ENCODE measurements at regions of chr20 and their contacts with region 1.

Region 1: DNA sequence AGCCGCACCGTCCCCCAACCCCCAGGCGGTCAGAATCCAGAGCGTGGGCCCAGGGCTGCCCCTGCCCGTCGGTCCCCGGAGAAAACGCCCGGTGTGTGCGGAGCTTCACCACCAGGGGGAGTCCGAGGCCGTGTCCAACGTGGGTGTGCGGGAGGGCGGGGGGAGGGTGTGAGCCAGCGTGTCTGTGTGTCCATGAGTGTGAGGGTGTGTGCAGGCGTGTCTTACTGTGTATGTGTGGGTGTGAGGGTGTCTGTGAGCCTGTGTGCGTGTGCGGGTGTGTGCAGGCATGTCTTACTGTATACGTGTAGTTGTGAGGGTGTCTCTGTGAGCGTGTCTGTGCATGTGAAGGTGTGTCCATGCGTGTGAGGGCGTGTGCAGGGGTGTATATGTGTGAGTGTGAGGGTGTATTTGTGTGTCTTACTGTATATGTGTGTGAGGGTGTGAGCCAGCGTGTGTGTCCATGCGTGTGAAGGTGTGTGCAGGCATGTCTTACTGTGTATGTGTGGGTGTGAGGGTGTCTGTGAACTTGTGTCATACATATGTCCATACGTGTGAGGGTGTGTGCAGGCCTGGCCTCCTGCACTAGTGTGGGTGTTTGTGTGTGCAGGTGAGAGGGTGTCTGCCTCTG is 24.6 kb upstream of the GATA5 start:
- DNase-seq: peak; percentile 86
- H3K27ac ChIP-seq: peak overlapping the region; percentile 34
- CTCF ChIP-seq: peak; percentile 99

Region 2: DNA sequence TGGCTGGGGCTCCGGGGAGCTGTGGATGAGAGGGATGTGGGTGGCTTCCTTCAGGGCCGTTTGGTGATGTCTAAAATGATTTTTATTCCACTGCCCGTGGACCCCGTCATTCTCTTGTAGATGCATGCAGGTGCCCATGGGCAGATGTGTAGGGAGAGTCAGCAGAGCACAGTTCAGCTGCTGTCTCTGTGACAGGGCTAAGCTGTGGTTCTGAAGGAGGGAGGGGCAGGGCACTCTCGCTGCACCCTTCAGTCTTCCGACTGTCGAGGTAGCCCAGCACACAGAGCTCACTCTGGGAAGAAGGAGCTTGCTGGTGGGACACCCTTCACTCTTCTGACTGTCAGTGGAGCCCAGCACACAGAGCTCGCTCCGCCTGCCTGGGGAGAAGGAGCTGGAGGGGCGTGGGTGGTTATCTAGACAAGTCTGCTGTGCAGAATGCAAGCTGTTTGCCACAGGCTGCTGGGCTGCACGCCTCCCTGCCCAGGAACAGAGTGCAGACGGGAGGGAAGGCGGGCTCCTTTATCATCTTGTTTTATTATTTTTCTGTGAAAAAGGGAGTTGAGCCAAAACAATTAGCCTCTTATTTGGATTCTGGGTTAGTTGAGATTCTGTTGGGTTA is 225.9 kb before region 1 on chr20:
- CTCF ChIA-PET with region 1: no interaction called
- POLR2A ChIA-PET with region 1: no interaction called
- DNase-seq: no peak
- H3K27ac ChIP-seq: peak overlapping the region; percentile 11
- CTCF ChIP-seq: no peak

Region 3: GRCh38 chr20:62409931-62410745 is 90.2 kb before region 1 on chr20:
- CTCF ChIA-PET with region 1: interaction called, 29 read pairs
- POLR2A ChIA-PET with region 1: no interaction called
- DNase-seq: peak; percentile 66
- H3K27ac ChIP-seq: peak overlapping the region; percentile 21
- CTCF ChIP-seq: peak; percentile 78

Region 4: GRCh38 chr20:62427172-62428001 is 73.0 kb before region 1 on chr20 and contains the start of gene RBBP8NL:
- CTCF ChIA-PET with region 1: interaction called, 16 read pairs
- POLR2A ChIA-PET with region 1: no interaction called
- DNase-seq: peak; percentile 93
- H3K27ac ChIP-seq: no peak within 1 kb of the TSS
- CTCF ChIP-seq: no peak

Region 5: DNA sequence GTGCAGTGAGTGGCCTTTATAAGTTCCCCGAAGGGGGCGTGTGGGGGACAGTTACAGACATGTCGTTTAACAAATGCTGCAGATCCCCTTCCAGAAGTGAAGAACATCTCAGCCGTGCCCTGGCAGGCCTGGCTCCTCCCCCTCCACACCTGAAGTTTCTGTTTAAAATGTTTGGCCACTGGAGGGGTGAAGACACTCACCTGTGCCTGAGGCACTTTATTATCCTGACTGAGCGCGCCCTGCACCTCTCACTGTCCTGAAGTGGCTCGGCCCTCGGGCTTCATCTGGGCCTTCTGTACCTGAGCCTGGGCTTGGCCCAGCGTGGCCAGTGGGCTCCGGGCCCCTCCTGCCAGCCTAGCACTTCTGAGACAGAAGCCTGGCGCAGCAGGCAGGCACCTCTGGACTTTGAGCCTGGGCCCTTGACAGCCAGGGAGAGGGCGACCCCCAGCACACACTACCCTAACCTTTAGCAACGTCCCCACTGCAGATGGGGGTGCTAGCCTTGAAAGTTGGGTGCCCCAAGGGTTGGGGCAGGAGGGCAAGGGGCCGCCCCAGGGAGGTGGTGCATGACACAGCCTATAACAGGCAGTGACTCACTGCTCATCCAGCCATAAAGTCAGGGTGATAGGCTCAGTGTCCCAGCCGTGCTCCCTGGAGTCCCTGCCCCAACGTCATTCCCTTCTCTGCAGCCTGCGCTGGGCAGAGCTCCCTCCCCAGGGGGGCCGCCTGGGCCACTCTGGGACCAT is 11.0 kb before region 1 on chr20:
- CTCF ChIA-PET with region 1: interaction called, 16 read pairs
- POLR2A ChIA-PET with region 1: no interaction called
- DNase-seq: peak; percentile 96
- H3K27ac ChIP-seq: peak overlapping the region; percentile 21
- CTCF ChIP-seq: no peak

Region 6: GRCh38 chr20:62536871-62537401 is 36.6 kb after region 1 on chr20:
- CTCF ChIA-PET with region 1: interaction called, 10 read pairs
- POLR2A ChIA-PET with region 1: no interaction called
- DNase-seq: no peak
- H3K27ac ChIP-seq: no peak overlapping the region
- CTCF ChIP-seq: no peak

Region 7: GRCh38 chr20:62642040-62642665 is 141.8 kb after region 1 on chr20 and contains the start of gene SLCO4A1:
- CTCF ChIA-PET with region 1: interaction called, 11 read pairs
- POLR2A ChIA-PET with region 1: no interaction called
- DNase-seq: peak; percentile 94
- H3K27ac ChIP-seq: peak within 1 kb of the TSS; percentile 98
- CTCF ChIP-seq: no peak

Measured in RWPE1 (cell line).